ENCODE measurements at regions of chr5 and their contacts with region 1.

Region 1: DNA sequence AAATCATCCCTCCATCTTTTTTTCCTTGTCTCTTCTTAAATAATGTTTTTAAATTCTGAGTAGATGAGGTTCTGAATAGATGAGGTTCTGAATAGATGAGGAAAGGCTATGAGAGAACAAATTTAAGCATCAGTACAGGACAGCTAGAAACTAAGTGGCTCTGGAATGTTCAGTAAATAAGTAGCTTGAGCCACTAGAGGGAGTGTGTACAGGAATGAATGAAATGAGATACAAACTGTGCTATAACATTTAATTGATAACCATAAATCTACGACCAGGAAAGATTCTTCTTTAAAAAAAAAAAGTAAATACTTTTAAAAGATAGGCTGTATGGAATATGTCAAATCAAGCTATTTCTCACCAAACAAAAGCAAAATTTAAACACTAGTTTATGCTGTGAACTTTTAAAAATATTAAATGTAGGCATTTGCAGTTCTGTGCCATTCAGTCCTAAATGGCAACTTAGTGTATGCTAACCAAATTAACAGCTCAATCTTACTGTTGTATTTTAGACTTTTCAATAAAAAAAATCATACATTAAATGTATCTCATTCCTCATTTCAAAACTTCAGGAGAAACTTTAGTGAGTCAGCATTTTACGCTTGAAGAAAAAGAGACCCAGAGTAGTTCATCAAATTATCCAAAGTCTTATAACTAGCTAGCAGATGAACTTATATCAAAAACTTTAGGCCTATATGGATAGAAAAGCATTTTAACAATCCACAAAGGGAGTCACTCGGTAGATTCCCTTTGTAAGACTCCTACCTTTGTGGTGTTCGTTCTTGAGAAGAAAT is 70.4 kb upstream of the SNX2 start:
- H3K4me3 ChIP-seq: no peak overlapping the region
- H3K27ac ChIP-seq: no peak overlapping the region
- H3K4me1 ChIP-seq: no peaks in the 10 kb centered on the region
- CTCF ChIP-seq: 0 out of 2 replicates have a peak, but pooled peaks have one; percentile 18

Region 2: DNA sequence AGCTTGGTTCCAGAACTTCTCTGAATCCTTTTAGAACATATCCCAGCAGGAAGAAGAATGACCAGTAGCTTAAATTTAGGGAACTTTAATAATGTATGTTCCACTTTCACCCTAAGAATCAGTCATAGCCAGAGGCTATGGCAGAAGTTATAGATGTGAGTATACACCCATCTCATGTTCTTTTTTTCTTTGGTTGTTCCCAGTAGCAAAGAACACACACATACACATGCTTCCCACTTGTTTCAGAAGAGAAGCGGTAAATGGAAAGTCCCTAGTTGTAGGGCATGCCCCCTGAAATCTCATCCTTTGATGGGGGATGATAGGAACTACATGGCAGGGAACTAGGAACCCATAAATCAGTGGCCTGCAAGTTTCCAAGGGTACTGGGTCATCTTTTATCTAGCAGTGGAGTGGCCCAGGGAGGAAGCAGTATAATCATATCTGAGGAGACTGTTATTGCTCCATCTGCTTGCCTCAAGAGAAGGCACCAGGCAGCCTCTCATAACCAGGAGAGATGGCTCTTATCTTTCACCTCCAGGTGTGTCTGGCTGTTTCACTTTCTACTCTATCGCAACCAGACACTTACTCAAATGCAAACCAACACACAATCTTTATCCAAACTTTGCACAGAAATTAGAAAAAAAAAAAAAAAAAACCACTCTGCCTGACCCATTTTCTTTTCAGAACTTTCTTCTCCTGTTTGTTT is 282.9 kb before region 1 on chr5:
- CTCF ChIA-PET with region 1: no interaction called
- POLR2A ChIA-PET with region 1: no interaction called
- H3K4me3 ChIP-seq: no peak overlapping the region
- H3K27ac ChIP-seq: no peak overlapping the region
- H3K4me1 ChIP-seq: peaks cover 3% of the 10 kb centered on the region; the same call in 1 of the 2 replicates
- CTCF ChIP-seq: no peak

Region 3: DNA sequence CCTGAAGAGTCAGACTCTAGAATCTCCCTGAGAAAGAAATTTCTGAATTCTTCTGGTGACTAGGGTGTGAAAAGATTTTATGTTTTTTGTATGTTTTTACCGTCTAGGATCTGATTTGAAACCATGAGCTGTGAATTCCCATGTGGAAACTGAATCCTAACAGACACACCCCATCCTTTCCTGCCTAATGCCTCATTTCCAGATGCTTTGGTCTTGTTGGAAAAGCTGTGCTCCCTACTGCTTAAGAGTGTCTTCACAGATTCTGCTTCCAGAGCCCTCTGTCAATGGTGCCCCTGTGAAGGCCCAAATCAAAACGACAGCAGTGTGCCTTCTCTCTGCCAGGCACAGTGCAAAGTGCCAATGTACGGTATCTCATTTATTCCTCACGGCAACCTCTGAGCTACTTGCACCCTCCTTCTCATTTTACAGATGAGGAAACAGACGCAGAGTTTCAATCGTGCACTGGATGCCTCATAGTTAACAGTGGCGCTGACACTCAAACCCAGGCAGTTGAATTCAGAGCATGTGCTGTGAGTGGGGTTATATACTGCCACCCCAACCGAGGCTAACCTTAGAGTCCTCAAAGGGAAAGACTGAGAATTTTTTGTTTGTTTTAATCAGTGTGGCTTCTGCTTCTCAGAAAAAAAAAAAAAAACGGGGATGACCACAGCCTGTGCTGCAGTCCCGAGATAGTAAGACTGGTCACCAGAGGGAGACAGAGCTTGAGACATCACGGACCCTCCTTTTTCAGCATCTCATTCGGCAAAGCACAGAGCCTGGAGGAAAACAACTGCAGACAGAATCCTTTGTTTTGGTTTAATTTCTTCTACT is 204.0 kb before region 1 on chr5:
- CTCF ChIA-PET with region 1: interaction called, 12 read pairs
- POLR2A ChIA-PET with region 1: no interaction called
- H3K4me3 ChIP-seq: no peak overlapping the region
- H3K27ac ChIP-seq: no peak overlapping the region
- H3K4me1 ChIP-seq: no peaks in the 10 kb centered on the region
- CTCF ChIP-seq: peak; percentile 66

Region 4: DNA sequence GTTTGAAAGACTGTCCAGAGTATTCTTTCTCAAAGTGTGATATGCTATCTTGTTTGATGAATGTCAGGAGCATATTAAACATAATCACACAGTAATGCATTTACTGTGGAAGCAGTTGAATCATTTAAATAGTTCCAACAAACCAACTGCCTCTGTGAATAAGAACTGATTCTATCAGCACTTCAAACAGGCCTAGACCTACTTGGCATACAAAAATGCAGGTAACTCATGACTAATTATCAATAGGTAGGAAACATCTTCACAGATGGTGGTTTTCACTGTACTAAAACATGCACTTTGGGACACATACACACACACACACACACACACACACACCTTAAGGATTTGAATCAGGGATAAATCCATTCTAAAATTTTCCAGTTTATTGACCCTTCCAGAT is 20.8 kb before region 1 on chr5:
- CTCF ChIA-PET with region 1: no interaction called
- POLR2A ChIA-PET with region 1: no interaction called
- H3K4me3 ChIP-seq: no peak overlapping the region
- H3K27ac ChIP-seq: no peak overlapping the region
- H3K4me1 ChIP-seq: no peaks in the 10 kb centered on the region
- CTCF ChIP-seq: no peak

Region 5: DNA sequence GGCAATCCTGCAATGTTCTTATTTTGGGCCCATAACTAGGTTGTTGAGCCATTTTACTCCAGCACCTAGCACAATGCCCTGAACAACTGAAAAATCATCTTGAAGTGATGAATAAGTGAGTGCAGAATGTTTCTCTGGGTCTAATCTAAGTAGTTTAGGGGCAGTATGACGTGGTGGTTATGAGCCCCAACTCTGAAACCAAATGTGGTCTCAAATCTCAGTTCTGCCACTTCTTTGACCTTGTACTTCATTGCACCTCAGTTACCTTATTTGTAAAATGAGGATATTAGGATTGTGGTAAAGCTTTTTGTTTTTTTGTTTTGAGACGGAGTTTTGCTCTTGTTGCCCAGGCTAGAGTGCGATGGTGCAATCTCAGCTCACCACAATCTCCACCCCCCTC is 10.5 kb before region 1 on chr5:
- CTCF ChIA-PET with region 1: interaction called, 11 read pairs
- POLR2A ChIA-PET with region 1: no interaction called
- H3K4me3 ChIP-seq: no peak overlapping the region
- H3K27ac ChIP-seq: no peak overlapping the region
- H3K4me1 ChIP-seq: no peaks in the 10 kb centered on the region
- CTCF ChIP-seq: no peak